Calu3 (cell line): ENCODE measurements at regions of chr6 and their contacts with region 1.

Region 1: GRCh38 chr6:52127935-52128334 is 40.5 kb upstream of the PKHD1 start:
- DNase-seq: no peak
- H3K4me3 Mint-ChIP-seq: no peak overlapping the region
- H3K27ac Mint-ChIP-seq: no peak overlapping the region
- H3K4me1 Mint-ChIP-seq: peaks cover 40% of the 10 kb centered on the region
- H3K27me3 Mint-ChIP-seq: no peaks in the 10 kb centered on the region
- CTCF ChIP-seq: no peak

Region 2: DNA sequence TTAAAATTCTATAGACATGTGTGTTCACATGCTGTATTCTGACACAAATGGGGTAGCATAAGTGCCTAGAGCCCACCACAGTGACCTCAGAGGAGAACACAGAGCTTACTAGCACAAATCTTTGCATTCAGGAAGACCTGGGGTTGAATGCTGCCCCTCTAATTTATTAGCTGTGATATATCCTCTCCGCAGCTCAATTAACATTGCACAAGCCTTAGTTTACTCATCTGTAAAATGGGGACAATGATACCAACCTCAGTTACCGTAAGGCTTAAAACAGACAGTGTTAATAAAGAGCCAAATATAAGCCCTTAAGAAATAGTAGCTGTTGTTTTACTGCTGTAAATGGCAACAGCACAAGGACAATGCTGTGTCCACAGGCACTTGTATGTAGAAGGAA is 22.0 kb after region 1 on chr6:
- CTCF ChIA-PET with region 1: interaction called, 5 read pairs
- intact Hi-C with region 1: loop called (anchors 2 kb)
- DNase-seq: no peak
- H3K4me3 Mint-ChIP-seq: no peak overlapping the region
- H3K27ac Mint-ChIP-seq: no peak overlapping the region
- H3K4me1 Mint-ChIP-seq: peaks cover 15% of the 10 kb centered on the region
- H3K27me3 Mint-ChIP-seq: peaks cover 18% of the 10 kb centered on the region
- CTCF ChIP-seq: no peak

Region 3: GRCh38 chr6:52201046-52201445 is 73.1 kb after region 1 on chr6:
- CTCF ChIA-PET with region 1: no interaction called
- intact Hi-C with region 1: no loop called
- DNase-seq: no peak
- H3K4me3 Mint-ChIP-seq: no peak overlapping the region
- H3K27ac Mint-ChIP-seq: no peak overlapping the region
- H3K4me1 Mint-ChIP-seq: no peaks in the 10 kb centered on the region
- H3K27me3 Mint-ChIP-seq: peaks cover 41% of the 10 kb centered on the region
- CTCF ChIP-seq: no peak